H1 (cell line): ENCODE measurements at regions of chr16 and their contacts with region 1.

Region 1: DNA sequence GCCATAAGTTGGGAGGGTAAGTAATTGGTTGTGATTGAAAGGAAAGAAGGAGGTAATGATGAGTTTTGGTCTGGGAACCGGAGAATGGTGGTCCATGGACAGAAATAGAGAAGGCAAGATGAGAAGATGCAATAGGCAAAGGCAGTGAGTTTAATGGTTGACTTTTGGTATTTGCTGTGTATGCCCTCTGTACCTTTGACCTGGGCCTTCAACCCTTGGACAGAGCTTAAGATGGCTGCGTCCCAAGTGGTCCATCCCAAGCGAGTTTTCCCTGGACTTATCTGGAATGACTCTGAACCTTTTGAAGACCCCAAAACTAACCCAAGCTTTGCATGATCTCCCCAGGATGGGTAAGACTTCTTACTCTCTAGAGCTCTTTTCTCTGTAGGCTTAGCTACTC is 664.5 kb downstream of the MAF start:
- DNase-seq: no peak
- H3K4me3 ChIP-seq: no peak overlapping the region
- H3K27ac ChIP-seq: no peak overlapping the region
- H3K4me1 ChIP-seq: no peaks in the 10 kb centered on the region
- H3K27me3 ChIP-seq: no peaks in the 10 kb centered on the region
- CTCF ChIP-seq: no peak
- EP300 ChIP-seq: no peak
- POLR2A ChIP-seq: no peak
- RAD21 ChIP-seq: no peak

Region 2: DNA sequence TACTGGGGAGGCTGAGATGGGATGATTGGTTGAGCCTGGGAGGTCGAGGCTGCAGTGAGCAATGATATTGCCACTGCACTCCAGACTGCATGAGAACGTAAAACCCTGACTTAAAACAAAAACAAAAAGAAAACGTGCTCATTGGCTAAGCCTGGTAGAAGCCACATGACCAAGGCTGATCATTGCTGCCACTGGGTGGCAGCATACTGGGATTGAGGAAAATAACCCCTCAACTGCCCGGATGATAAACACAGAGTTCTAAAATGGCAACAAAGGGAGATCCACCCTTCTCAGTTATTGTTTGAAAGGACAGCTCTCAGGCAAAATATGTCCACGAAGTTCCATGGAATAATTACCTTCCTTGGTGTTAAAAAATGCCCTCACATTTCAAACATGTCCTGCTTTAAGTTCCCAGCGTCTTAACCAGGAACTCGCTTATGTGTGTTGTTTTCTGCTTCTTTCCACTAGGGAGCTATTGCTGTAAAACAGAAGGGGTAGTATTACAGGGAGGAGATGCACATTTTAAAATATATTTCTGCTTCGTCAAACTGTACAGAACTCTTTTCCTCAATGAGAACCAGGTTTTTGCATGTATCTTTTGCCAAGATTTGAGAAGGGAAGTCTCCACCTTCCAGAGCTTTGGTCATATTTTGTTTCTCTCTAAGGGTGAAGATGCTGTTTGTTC is 10.8 kb before region 1 on chr16:
- CTCF ChIA-PET with region 1: interaction called, 16 read pairs
- POLR2A ChIA-PET with region 1: no interaction called
- DNase-seq: peak; percentile 19 to 65
- H3K4me3 ChIP-seq: no peak overlapping the region
- H3K27ac ChIP-seq: no peak overlapping the region
- H3K4me1 ChIP-seq: no peaks in the 10 kb centered on the region
- H3K27me3 ChIP-seq: no peaks in the 10 kb centered on the region
- CTCF ChIP-seq: peak; percentile 44 to 72 (median 57)
- EP300 ChIP-seq: no peak
- POLR2A ChIP-seq: no peak
- RAD21 ChIP-seq: peak; percentile 51 to 64

Region 3: DNA sequence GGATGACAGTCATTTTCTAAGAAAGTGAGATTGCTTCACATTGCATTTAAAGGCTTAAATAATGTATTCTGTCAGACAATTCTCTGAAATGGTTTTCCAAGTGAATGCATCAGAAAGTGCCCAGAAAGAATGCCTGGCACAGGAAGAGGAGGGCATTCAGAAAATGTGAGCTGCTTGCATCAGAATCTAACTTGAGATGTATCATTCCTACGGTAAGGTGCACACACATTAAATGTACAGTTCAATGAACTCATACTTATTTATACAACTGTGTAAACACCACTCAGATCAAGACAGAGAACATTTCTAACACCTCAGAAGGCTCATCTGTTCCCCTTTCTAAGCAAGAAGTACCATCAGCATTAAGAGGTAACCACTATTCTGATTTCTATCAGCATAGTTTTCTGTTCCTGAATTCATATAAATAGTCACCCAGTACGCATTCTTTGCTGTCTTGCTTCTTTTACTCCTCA is 26.4 kb after region 1 on chr16:
- CTCF ChIA-PET with region 1: no interaction called
- POLR2A ChIA-PET with region 1: no interaction called
- DNase-seq: no peak
- H3K4me3 ChIP-seq: no peak overlapping the region
- H3K27ac ChIP-seq: no peak overlapping the region
- H3K4me1 ChIP-seq: peaks cover 0 to 4% (median 0%) of the 10 kb centered on the region in 4 experiments; a peak in 1 of 7 replicates
- H3K27me3 ChIP-seq: no peaks in the 10 kb centered on the region
- CTCF ChIP-seq: no peak
- EP300 ChIP-seq: no peak
- POLR2A ChIP-seq: no peak
- RAD21 ChIP-seq: no peak

Region 4: GRCh38 chr16:78982096-78982744 is 46.2 kb after region 1 on chr16:
- CTCF ChIA-PET with region 1: no interaction called
- POLR2A ChIA-PET with region 1: no interaction called
- DNase-seq: no peak
- H3K4me3 ChIP-seq: no peak overlapping the region
- H3K27ac ChIP-seq: no peak overlapping the region
- H3K4me1 ChIP-seq: no peaks in the 10 kb centered on the region
- H3K27me3 ChIP-seq: no peaks in the 10 kb centered on the region
- CTCF ChIP-seq: no peak
- EP300 ChIP-seq: no peak
- POLR2A ChIP-seq: no peak
- RAD21 ChIP-seq: no peak